BJ (cell line): ENCODE measurements at regions of chr10 and their contacts with region 1.

Region 1: GRCh38 chr10:13556676-13557319 is 28.0 kb upstream of the BEND7 start:
- DNase-seq: no peak
- H3K4me3 ChIP-seq: no peak overlapping the region
- H3K27me3 ChIP-seq: no peaks in the 10 kb centered on the region; the same call in 1 of the 2 replicates
- CTCF ChIP-seq: no peak

Region 2: GRCh38 chr10:15395935-15396334 is 1839.1 kb after region 1 on chr10:
- CTCF ChIA-PET with region 1: no interaction called
- POLR2A ChIA-PET with region 1: interaction called, 14 read pairs
- DNase-seq: no peak
- H3K4me3 ChIP-seq: no peak overlapping the region
- H3K27me3 ChIP-seq: peaks cover 4% of the 10 kb centered on the region; the same call in 1 of the 2 replicates
- CTCF ChIP-seq: no peak